AG04449 (cell line): ENCODE measurements at regions of chr5 and their contacts with region 1.

Region 1: GRCh38 chr5:33794550-33795181 is 97.1 kb downstream of the ADAMTS12 start:
- DNase-seq: no peak
- H3K4me3 ChIP-seq: peak overlapping the region; percentile 47
- CTCF ChIP-seq: no peak

Region 2: DNA sequence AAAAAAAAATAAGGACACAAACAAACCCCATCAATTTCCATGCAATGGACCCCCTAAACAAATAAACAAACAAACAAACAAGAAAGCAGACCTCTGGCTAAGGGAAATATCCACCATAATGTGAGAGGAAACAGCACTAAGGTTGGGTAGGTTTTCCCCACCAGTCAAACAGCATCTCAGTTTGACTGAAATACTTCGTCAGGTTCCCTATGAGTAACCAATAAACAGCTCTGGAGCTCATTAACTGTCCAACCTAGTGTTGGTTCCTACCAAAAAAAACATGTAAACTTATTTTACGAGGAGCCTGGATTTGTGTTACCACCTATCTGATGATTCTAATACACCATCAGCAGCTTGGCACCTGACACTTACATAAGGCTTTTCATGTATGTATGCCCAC is 552.4 kb before region 1 on chr5:
- CTCF ChIA-PET with region 1: no interaction called
- POLR2A ChIA-PET with region 1: no interaction called
- DNase-seq: no peak
- H3K4me3 ChIP-seq: no peak overlapping the region
- CTCF ChIP-seq: no peak

Region 3: GRCh38 chr5:33671700-33672291 is 122.9 kb before region 1 on chr5:
- CTCF ChIA-PET with region 1: no interaction called
- POLR2A ChIA-PET with region 1: no interaction called
- DNase-seq: no peak
- H3K4me3 ChIP-seq: no peak overlapping the region
- CTCF ChIP-seq: no peak

Region 4: GRCh38 chr5:33713136-33713765 is 81.4 kb before region 1 on chr5:
- CTCF ChIA-PET with region 1: no interaction called
- POLR2A ChIA-PET with region 1: no interaction called
- DNase-seq: no peak
- H3K4me3 ChIP-seq: no peak overlapping the region
- CTCF ChIP-seq: no peak

Region 5: DNA sequence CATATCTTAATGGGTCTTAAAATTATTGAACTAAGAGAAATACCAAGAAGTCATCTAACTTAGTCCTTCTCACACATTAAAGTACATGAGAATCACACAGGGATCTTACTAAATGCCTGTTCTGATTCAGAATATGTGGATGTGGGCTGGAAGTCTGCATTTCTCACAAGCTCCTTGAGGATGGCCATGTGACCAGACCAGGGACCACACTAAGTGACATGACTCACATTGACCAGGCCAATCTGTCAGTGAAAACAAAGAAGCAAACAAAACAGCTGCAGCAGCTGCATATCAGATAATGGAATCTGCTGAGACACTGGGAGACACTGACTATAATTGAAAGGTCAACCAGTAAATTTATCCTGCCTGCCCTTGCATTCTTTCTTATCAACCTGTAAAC is 13.4 kb before region 1 on chr5:
- CTCF ChIA-PET with region 1: no interaction called
- POLR2A ChIA-PET with region 1: no interaction called
- DNase-seq: no peak
- H3K4me3 ChIP-seq: no peak overlapping the region
- CTCF ChIP-seq: no peak

Region 6: DNA sequence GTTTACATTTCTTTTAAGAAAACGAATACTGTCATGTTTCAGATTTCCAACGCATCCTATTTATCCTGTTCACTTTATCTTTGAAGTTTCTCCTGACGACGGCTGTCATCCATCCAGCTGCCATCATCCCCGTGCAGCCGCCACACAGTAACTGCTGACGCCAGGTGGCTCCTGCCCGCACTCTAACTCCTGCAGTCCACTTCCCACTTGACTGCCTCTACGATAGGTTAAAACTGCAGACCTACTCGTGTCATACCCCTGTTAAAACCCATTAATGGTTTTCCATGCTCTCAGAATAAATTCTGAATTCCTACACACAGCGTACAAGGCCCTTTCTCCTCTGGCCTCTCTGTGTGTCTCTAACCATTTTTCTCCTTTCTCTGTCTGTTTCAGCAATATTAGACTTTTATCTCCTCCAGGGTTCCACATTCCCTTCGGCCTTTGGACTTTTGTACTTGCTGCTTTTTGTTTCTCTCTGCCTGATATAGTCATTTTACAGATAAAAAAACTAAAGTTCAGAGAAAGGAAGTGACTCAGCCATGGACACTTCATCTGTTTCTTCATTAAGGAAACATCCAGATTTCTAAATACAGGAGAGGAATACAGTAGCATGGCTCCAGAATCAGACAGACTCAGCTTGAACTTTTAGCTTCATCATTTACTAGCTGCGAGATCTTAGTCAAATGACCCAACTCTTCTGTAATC is 12.2 kb after region 1 on chr5:
- CTCF ChIA-PET with region 1: interaction called, 10 read pairs
- POLR2A ChIA-PET with region 1: no interaction called
- DNase-seq: no peak
- H3K4me3 ChIP-seq: no peak overlapping the region
- CTCF ChIP-seq: no peak